ENCODE measurements at regions of chr1 and their contacts with region 1.

Region 1: GRCh38 chr1:203172128-203173010 is 3.3 kb downstream of the MYBPH start:
- DNase-seq: peak; percentile 72
- ATAC-seq: peak; percentile 53

Region 2: DNA sequence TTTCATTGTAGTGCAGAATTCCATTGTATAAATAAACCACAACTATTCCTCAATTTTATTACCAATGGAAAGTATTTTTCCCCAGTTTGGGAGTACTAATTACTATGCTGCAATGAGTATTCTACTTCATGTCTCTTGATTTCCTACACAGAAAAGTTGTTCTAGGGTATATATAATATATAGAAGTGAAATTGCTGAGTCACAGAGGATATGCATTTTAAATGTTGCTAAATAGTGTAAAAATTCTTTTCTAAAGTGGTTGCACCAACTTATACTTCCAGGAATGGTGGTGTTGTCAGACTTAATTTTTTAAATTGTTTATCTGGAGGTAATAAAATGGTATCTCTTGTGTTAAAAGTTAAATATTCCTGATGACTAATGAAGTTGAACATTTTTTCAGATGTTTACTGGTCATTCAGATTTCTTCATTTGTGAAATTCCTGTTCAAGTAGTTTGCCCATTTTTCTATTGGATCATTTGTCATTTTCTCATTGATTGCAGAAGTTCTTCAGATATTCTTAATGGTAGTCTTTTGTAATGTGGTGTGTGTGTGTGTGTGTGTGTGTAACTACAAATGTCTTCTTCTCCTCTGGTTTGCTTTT is 67.5 kb before region 1 on chr1:
- intact Hi-C with region 1: no loop called
- DNase-seq: no peak
- ATAC-seq: no peak

Region 3: GRCh38 chr1:203117611-203118575 is 54.5 kb before region 1 on chr1:
- intact Hi-C with region 1: loop called (anchors 1 kb)
- DNase-seq: peak; percentile 89
- ATAC-seq: peak; percentile 94

Region 4: GRCh38 chr1:203216274-203217138 is 44.1 kb after region 1 on chr1:
- intact Hi-C with region 1: loop called (anchors 2 kb)
- DNase-seq: no peak
- ATAC-seq: peak; percentile 63